Heart left ventricle (tissue), 16 donors: ENCODE measurements at regions of chr1 and their contacts with region 1.

Region 1: GRCh38 chr1:181111551-181111950 is 23.1 kb downstream of the IER5 start:
- DNase-seq: no peak
- ATAC-seq: no peak
- H3K4me3 ChIP-seq: no peak overlapping the region
- H3K27ac ChIP-seq: peak overlapping the region in 3 of 12 donors; percentile 64 to 73 (median 64)
- H3K4me1 ChIP-seq: peaks cover 6 to 55% (median 25%) of the 10 kb centered on the region in 12 donors
- H3K27me3 ChIP-seq: no peaks in the 10 kb centered on the region
- CTCF ChIP-seq: no peak
- POLR2A ChIP-seq: no peak

Region 2: DNA sequence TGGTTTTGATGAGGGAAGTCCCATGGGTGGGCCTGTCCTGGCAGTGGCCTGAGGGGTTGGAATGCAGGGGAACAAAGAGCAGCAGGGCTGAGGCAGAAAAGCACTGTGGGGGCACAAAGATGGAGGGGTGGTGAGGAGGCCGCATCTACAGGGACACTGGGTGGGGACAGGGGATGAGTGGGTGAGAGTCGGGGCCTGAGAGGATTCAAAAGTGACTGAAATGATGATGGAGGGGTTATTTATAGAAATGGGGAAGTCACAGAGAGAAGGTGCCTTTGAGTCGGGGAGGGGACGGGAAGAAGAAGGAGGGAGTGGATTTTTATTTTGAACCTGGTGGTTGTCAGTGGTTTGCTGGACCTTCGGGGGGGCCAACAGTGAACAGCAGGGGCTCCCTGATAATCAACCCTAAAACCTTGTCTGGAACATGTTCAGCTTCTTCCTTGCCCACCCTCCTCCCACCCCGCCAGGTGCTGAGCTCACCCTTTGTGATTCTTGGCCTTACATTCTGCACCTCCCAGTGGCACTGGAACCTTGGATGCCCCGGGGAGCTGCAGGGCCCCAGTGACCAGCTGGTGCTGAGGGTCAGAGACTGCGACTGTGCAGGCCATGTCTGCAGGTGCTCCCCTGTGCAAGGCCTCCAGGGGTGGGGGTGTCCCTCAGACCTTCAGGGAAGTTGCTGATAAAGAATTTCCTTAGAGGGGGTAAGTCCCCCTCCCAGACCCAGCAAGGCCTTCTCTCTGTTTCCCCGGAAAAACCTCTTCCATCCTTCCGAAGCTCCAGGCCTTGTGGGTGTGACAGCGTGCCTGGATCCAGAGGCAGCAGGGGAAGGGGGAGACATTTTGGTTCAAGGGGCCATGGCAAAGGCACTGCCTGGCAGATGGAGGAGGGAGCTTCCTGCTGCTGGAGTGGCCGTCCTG is 20.0 kb after region 1 on chr1:
- intact Hi-C with region 1: loop called in 1 of 10 experiments (anchors 2 kb)
- DNase-seq: no peak
- ATAC-seq: no peak
- H3K4me3 ChIP-seq: no peak overlapping the region
- H3K27ac ChIP-seq: no peak overlapping the region
- H3K4me1 ChIP-seq: peaks cover 7 to 89% (median 51%) of the 10 kb centered on the region in 12 donors
- H3K27me3 ChIP-seq: no peaks in the 10 kb centered on the region
- CTCF ChIP-seq: no peak
- POLR2A ChIP-seq: no peak

Region 3: GRCh38 chr1:181647314-181648195 is 536.0 kb after region 1 on chr1:
- intact Hi-C with region 1: no loop called
- DNase-seq: no peak
- ATAC-seq: no peak
- H3K4me3 ChIP-seq: no peak overlapping the region
- H3K27ac ChIP-seq: no peak overlapping the region
- H3K4me1 ChIP-seq: no peaks in the 10 kb centered on the region
- H3K27me3 ChIP-seq: peaks cover 0 to 20% (median 0%) of the 10 kb centered on the region in 9 donors
- CTCF ChIP-seq: no peak
- POLR2A ChIP-seq: no peak